Mammary epithelial cell (primary cell): ENCODE measurements at regions of chr2 and their contacts with region 1.

Region 1: DNA sequence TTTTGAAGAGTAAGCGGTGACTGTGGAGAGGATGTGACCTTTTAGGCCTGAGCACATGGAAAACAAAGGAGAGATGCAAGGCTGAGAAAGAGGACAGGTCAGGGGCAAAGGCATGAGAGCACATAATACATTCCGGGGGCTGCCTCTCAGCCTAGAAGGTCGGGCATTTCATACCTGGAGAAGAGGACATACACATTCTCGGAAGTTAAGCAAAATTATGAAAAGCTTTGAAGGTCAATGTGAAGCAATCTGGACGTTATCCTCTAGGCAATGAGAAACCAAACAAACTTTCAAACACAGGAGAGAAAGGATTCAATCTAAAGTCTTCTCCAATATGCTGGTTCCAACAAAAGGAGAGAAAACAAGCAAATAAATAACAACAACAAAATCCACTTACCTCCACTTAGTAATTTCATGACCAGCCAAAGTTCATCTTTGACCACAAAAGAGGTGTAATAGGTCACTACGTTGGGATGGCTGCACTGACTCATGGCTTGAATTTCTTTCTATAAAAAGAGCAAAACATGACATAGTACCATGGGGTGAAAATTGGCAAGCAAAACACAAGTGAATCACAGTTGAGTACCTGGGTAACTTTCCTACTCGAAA is 80.4 kb downstream of the STK39 start:
- DNase-seq: peak; percentile 87
- H3K4me3 ChIP-seq: no peak overlapping the region
- H3K27ac ChIP-seq: no peak overlapping the region
- H3K4me1 ChIP-seq: peaks cover 13% of the 10 kb centered on the region
- H3K27me3 ChIP-seq: no peaks in the 10 kb centered on the region
- CTCF ChIP-seq: no peak

Region 2: GRCh38 chr2:168216351-168217005 is 49.5 kb after region 1 on chr2:
- CTCF ChIA-PET with region 1: no interaction called
- dilution Hi-C with region 1: loop called (anchors 5 kb)
- in situ Hi-C with region 1: no loop called
- intact Hi-C with region 1: no loop called
- DNase-seq: peak; percentile 58
- H3K4me3 ChIP-seq: no peak overlapping the region
- H3K27ac ChIP-seq: peak overlapping the region; percentile 4
- H3K4me1 ChIP-seq: peaks cover 57% of the 10 kb centered on the region
- H3K27me3 ChIP-seq: no peaks in the 10 kb centered on the region
- CTCF ChIP-seq: no peak

Region 3: GRCh38 chr2:168231609-168232241 is 64.7 kb after region 1 on chr2:
- CTCF ChIA-PET with region 1: no interaction called
- dilution Hi-C with region 1: no loop called
- in situ Hi-C with region 1: no loop called
- intact Hi-C with region 1: no loop called
- DNase-seq: no peak
- H3K4me3 ChIP-seq: no peak overlapping the region
- H3K27ac ChIP-seq: no peak overlapping the region
- H3K4me1 ChIP-seq: peaks cover 3% of the 10 kb centered on the region
- H3K27me3 ChIP-seq: no peaks in the 10 kb centered on the region
- CTCF ChIP-seq: no peak